Activated naive CD4-positive, alpha-beta T cell treated with anti-CD3 and anti-CD28 coated beads for 36 hours (primary cell): ENCODE measurements at regions of chr3 and their contacts with region 1.

Region 1: DNA sequence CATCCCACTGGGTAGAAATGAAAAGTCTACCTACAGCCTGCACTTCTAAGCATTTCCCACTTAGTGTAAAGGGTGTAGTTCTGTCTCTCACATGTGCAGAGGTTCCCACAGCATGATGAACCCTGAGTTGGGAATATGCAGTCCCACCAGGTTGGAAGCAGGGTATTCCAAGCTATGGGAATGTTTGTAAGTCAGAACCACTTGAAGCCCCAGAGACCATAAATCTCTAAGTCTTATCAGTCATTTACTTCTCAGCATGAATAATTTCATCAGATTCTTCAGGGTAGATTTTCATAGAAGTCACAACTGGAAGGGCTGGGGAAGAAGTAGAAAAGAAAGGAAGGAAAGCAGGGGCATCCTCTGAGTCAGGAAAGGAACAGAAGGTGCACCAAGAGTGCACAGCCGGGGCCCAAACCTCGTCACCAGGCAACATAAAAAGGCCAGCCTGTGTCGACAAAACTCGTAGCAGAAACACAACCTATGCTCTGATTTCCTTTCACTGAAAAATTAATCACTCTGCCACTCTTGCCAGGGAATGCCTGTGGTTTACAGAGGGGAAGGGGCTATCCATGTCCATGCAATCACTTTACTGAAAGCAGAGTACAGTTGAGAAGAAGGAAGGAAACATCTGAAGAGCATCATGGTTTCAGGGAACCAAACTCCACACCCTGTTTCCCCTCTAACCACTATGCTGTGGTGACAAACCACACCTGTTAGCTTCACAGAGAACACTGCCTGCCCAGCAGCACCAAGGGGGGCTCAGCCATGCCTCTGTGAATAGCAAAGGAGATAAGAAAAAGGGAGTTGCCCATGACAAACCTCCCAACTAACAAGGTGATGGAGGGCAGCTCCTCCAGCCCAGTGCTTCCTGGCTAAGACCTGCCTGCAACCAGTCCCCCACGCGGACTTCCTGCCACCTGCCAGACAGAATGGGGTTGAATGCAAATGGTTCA is 40.5 kb downstream of the SH3BP5 start:
- DNase-seq: peak; percentile 84
- H3K4me3 Mint-ChIP-seq: peak overlapping the region; percentile 0
- H3K27ac Mint-ChIP-seq: peak overlapping the region; percentile 76
- H3K4me1 Mint-ChIP-seq: peaks cover 72% of the 10 kb centered on the region
- H3K27me3 Mint-ChIP-seq: no peaks in the 10 kb centered on the region

Region 2: GRCh38 chr3:15309662-15310335 is 17.9 kb after region 1 on chr3:
- CTCF ChIA-PET with region 1: interaction called, 6 read pairs
- intact Hi-C with region 1: loop called (anchors 1 kb)
- DNase-seq: peak; percentile 76
- H3K4me3 Mint-ChIP-seq: no peak overlapping the region
- H3K27ac Mint-ChIP-seq: peak overlapping the region; percentile 95
- H3K4me1 Mint-ChIP-seq: peaks cover 66% of the 10 kb centered on the region
- H3K27me3 Mint-ChIP-seq: no peaks in the 10 kb centered on the region